ENCODE measurements at regions of chr3 and their contacts with region 1.

Region 1: DNA sequence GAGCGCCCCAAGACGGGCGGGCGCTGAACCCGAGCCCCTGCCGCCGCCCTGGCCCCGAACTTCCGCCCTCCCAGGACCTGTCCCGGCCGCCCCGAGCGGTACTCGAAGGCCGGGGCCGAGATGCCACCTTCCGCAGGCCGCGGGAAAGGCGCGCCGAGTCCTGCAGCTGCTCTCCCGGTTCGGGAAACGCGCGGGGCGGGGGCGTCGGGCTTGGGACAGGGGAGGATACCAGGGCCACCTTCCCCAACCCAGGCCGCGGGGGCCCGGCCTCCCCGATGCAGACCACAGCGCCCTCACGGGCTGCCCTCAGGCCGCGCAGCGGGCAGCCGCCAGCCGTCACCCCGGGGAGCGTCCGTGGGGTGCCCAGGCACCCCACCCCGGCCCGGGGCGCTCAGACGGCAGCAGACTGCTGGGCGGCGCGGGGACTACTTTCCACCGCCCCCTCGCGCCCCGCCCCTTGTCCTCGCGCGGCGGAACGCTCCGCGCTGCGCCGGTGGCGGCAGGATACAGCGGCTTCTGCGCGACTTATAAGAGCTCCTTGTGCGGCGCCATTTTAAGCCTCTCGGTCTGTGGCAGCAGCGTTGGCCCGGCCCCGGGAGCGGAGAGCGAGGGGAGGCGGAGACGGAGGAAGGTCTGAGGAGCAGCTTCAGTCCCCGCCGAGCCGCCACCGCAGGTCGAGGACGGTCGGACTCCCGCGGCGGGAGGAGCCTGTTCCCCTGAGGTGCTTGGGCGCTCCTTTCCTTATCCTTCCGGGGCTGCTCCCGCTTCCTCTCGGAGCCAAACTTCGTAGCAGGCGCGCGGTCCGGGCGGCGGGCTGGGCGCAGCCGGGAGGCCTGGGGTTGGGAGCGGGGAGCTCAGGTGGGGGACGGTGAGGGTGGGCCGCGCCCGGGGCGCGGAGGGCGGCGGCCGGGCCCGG is at the start of gene CTNNB1:
- DNase-seq: peak; percentile 91 to 95 (median 94)
- H3K4me3 ChIP-seq: peak within 1 kb of the TSS; percentile 78 to 89 (median 89)
- H3K4me3 Mint-ChIP-seq: peak within 1 kb of the TSS; percentile 93 to 98
- H3K27ac ChIP-seq: peak within 1 kb of the TSS; percentile 90 to 94
- H3K27ac Mint-ChIP-seq: peak within 1 kb of the TSS; percentile 87 to 96 (median 94)
- H3K4me1 ChIP-seq: peaks cover 15 to 43% of the 10 kb centered on the region in 2 donors
- H3K4me1 Mint-ChIP-seq: peaks cover 37% of the 10 kb centered on the region
- H3K27me3 ChIP-seq: no peaks in the 10 kb centered on the region
- H3K27me3 Mint-ChIP-seq: no peaks in the 10 kb centered on the region
- CTCF ChIP-seq: peak; percentile 15
- polyA plus RNA-seq, gene CTNNB1: 51.2 to 240 (median 54.3) TPM

Region 2: GRCh38 chr3:40452876-40453730 is 746.1 kb before region 1 on chr3:
- intact Hi-C with region 1: loop called in 1 of 2 experiments (anchors 10 kb)
- DNase-seq: peak; percentile 98 to 99 (median 99)
- H3K4me3 ChIP-seq: peak overlapping the region; percentile 75 to 94 (median 82)
- H3K4me3 Mint-ChIP-seq: peak overlapping the region; percentile 87 to 93
- H3K27ac ChIP-seq: peak overlapping the region; percentile 79 to 94
- H3K27ac Mint-ChIP-seq: peak overlapping the region; percentile 95 to 99 (median 98)
- H3K4me1 ChIP-seq: peaks cover 29 to 38% of the 10 kb centered on the region in 2 donors
- H3K4me1 Mint-ChIP-seq: peaks cover 24% of the 10 kb centered on the region
- H3K27me3 ChIP-seq: no peaks in the 10 kb centered on the region
- H3K27me3 Mint-ChIP-seq: no peaks in the 10 kb centered on the region
- CTCF ChIP-seq: no peak

Region 3: DNA sequence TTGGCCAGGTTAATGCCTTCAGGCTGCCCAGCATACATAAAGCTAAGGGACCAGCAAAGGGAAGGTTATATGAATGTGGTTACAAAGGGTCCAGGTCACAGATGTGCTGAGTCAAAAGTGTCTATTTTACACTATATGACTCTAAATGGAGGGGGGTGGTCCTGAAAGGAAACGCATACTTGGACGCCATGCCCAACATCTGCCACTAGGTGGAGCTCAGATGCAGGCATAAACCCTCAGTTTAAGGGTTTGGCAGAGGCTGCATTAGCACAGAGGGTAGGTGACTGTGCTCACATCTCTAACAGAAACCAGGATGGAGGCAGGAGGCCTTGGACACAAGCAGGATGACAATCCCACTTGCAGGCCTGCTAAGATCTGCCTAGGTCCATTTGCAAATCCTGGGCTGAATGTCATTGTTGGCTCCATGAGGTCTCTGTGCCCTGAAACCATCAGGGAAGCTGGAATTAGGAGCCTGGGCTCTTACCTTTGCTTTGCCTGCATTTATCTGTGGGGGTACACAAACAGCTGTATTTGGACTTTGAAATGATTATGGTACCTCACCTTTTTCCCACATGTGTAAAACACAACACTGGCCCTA is 618.6 kb before region 1 on chr3:
- intact Hi-C with region 1: loop called (anchors 5 to 10 kb)
- DNase-seq: peak; percentile 46 to 60 (median 56)
- H3K4me3 ChIP-seq: no peak overlapping the region
- H3K4me3 Mint-ChIP-seq: no peak overlapping the region
- H3K27ac ChIP-seq: no peak overlapping the region
- H3K27ac Mint-ChIP-seq: no peak overlapping the region
- H3K4me1 ChIP-seq: no peaks in the 10 kb centered on the region
- H3K4me1 Mint-ChIP-seq: peaks cover 3% of the 10 kb centered on the region
- H3K27me3 ChIP-seq: no peaks in the 10 kb centered on the region
- H3K27me3 Mint-ChIP-seq: peaks cover 2 to 6% (median 3%) of the 10 kb centered on the region in 3 donors
- CTCF ChIP-seq: peak; percentile 98

Region 4: DNA sequence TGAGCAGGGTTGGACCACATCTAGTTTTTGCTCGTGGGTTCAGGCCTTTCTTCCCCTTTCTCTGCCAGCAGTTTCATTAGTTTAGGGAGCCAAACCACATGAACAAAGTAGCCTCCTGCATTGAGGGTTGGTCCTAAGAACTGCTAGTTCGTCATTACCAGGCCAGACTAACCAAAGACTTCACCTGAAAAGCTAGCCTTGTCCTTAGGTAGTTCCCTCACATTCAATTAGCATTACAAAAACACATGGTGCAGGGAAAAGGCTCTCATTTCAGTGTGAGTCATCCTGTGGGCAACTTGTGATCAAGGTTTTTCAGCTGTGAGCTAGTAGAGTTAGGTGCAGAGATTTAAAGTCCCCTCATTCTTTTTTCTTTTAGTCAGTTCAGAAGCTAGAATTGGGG is 279.2 kb before region 1 on chr3:
- intact Hi-C with region 1: loop called in 1 of 2 experiments (anchors 5 kb)
- DNase-seq: peak; percentile 11 to 34 (median 20)
- H3K4me3 ChIP-seq: no peak overlapping the region
- H3K4me3 Mint-ChIP-seq: no peak overlapping the region
- H3K27ac ChIP-seq: no peak overlapping the region
- H3K27ac Mint-ChIP-seq: peak overlapping the region in 1 of 7 donors; percentile 13
- H3K4me1 ChIP-seq: no peaks in the 10 kb centered on the region
- H3K4me1 Mint-ChIP-seq: peaks cover 8% of the 10 kb centered on the region
- H3K27me3 ChIP-seq: no peaks in the 10 kb centered on the region
- H3K27me3 Mint-ChIP-seq: no peaks in the 10 kb centered on the region
- CTCF ChIP-seq: no peak

Region 5: DNA sequence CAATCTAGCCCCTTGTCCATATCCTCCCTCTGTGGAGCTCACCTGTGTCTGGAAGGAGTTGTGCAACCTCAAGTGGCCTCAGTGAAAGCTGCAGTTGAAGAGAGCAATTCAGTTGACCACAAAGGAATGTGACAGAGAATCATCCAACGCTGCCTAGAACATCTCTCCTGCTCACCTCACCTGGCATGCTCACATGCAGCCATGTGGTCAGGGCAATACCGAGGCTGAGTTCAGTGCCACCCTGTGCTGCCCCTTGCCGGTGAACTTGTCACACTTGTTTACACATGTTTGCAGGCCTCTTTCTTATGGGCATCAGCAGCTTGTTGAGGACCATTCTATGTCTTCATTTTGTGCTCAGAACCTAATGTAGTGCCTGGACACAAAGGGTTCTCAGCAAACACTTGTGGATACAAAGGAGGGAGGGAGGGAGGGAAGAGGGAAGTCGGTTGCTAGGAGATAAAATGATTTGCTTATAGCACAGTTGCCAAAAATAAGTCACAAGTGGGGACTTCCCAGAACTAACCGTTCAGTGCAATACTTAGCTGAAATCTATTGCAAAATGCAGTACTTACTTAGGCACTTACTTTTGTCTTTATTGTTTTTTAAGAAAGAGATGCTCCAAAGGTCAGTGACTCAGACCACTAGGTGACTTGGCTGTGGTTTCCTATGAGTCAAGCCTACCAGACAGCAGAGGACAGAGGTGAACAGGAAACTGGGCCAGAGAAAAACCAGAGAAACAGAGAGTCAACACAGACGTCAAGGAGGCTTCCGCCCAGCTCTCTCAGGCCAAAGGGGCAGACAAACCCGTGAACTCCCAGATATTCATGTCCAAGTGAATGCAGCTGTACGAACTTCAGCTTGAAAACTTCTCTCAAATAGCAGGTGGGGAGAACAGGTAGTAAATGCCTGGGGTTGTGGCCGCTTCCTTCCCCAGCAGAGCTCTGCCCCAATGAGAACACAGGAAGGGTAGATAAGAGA is 227.7 kb before region 1 on chr3:
- intact Hi-C with region 1: loop called (anchors 5 to 10 kb)
- DNase-seq: peak; percentile 96 to 99 (median 99)
- H3K4me3 ChIP-seq: no peak overlapping the region
- H3K4me3 Mint-ChIP-seq: peak overlapping the region; percentile 63 to 81
- H3K27ac ChIP-seq: peak overlapping the region; percentile 87 to 94
- H3K27ac Mint-ChIP-seq: peak overlapping the region; percentile 96 to 100 (median 99)
- H3K4me1 ChIP-seq: peaks cover 18 to 27% of the 10 kb centered on the region in 2 donors
- H3K4me1 Mint-ChIP-seq: peaks cover 35% of the 10 kb centered on the region
- H3K27me3 ChIP-seq: no peaks in the 10 kb centered on the region
- H3K27me3 Mint-ChIP-seq: peaks cover 0 to 8% (median 3%) of the 10 kb centered on the region in 3 donors
- CTCF ChIP-seq: no peak

Region 6: DNA sequence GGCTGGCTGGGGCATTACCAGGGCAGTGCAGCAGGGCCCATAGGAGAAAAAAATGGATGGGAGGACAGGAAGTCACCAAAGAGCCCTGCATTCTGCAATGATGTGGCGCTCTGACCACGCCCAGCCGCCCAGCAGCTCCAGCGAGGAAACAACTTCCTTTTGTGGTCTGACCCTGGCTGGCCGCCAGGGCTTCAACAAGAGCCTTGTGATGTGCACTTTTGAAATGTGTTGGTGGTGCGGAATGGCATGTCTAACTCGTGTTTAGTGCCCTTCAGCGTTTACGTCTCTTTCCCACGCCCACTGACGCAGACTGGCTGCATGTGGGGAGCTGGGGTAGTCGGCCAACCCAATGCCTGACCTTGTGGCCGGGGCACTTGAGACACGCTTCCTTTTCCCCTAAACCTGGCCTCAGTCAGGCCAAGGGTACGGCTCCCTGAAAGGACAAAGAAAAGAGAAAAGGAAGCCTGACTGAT is 81.8 kb before region 1 on chr3:
- intact Hi-C with region 1: loop called (anchors 5 to 10 kb)
- DNase-seq: peak; percentile 100
- H3K4me3 ChIP-seq: no peak overlapping the region
- H3K4me3 Mint-ChIP-seq: peak overlapping the region; percentile 22 to 69
- H3K27ac ChIP-seq: peak overlapping the region; percentile 78 to 90
- H3K27ac Mint-ChIP-seq: peak overlapping the region; percentile 95 to 98 (median 97)
- H3K4me1 ChIP-seq: peaks cover 26 to 35% of the 10 kb centered on the region in 2 donors
- H3K4me1 Mint-ChIP-seq: peaks cover 40% of the 10 kb centered on the region
- H3K27me3 ChIP-seq: no peaks in the 10 kb centered on the region
- H3K27me3 Mint-ChIP-seq: peaks cover 0 to 9% (median 0%) of the 10 kb centered on the region in 3 donors
- CTCF ChIP-seq: no peak